ENCODE measurements at regions of chr18 and their contacts with region 1.

Region 1: DNA sequence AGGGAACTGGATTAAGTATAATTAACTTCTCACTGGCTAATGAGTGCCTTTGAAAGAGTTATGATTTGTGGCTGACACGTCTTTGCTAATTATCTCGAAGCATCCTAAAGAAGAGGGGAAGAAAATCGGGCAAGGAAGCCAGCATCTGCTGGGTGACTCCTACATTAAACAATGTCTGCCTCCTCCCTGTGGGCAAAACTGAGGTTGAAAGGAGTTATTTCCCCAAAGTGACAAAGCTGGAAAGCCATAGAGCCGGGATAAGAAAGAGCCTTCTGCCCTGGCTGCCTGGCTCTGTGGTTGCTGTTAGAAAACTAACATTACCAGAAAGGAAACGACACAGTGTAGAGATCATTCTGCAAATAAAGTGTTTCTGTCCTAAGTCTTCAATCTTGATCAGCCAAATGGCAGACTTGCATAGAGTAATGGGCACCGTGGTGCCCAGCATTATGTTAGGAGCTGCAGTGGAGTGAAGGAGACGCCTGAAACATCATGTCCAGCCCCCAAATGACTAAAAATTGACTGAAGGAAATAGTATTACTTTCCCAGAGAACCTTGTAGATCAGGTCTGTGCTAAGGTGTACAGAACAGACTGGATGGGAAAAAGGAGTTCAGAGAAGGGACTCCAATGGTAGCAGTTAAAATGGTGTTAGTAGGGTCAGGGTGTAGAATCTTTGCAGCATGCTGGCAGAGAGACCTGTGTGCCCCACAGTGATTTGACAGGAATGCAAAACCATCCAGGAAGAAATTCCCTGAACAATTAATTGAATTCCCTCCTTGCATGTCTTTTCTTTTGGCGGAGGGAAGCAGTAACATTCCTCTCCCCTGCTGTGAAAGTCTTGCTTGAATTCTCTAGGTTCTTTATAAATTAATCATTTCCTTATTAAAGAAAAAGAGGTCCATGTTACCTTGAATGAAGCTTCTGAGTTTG is 44.4 kb downstream of the ALPK2 start:
- DNase-seq: peak; percentile 39
- ATAC-seq: peak; percentile 36
- H3K4me3 ChIP-seq: no peak overlapping the region
- H3K27ac ChIP-seq: no peak overlapping the region
- H3K4me1 ChIP-seq: peaks cover 20% of the 10 kb centered on the region
- H3K27me3 ChIP-seq: no peaks in the 10 kb centered on the region
- CTCF ChIP-seq: no peak

Region 2: GRCh38 chr18:58438161-58438957 is 146.1 kb before region 1 on chr18:
- CTCF ChIA-PET with region 1: no interaction called
- POLR2A ChIA-PET with region 1: no interaction called
- intact Hi-C with region 1: no loop called
- DNase-seq: no peak
- ATAC-seq: no peak
- H3K4me3 ChIP-seq: no peak overlapping the region
- H3K27ac ChIP-seq: no peak overlapping the region
- H3K4me1 ChIP-seq: no peaks in the 10 kb centered on the region
- H3K27me3 ChIP-seq: no peaks in the 10 kb centered on the region
- CTCF ChIP-seq: no peak

Region 3: GRCh38 chr18:58493516-58494253 is 90.8 kb before region 1 on chr18:
- CTCF ChIA-PET with region 1: no interaction called
- POLR2A ChIA-PET with region 1: no interaction called
- intact Hi-C with region 1: no loop called
- DNase-seq: peak; percentile 82
- ATAC-seq: peak; percentile 89
- H3K4me3 ChIP-seq: peak overlapping the region; percentile 43; the same call in 1 of the 2 replicates
- H3K27ac ChIP-seq: no peak overlapping the region
- H3K4me1 ChIP-seq: 0 out of 2 replicates have a peak, but pooled peaks cover 6% of the 10 kb centered on the region
- H3K27me3 ChIP-seq: no peaks in the 10 kb centered on the region
- CTCF ChIP-seq: peak; percentile 93

Region 4: GRCh38 chr18:58529714-58530354 is 54.6 kb before region 1 on chr18:
- CTCF ChIA-PET with region 1: no interaction called
- POLR2A ChIA-PET with region 1: no interaction called
- intact Hi-C with region 1: loop called (anchors 2 kb)
- DNase-seq: peak; percentile 71
- ATAC-seq: peak; percentile 75
- H3K4me3 ChIP-seq: no peak overlapping the region
- H3K27ac ChIP-seq: no peak overlapping the region
- H3K4me1 ChIP-seq: no peaks in the 10 kb centered on the region
- H3K27me3 ChIP-seq: no peaks in the 10 kb centered on the region
- CTCF ChIP-seq: peak; percentile 97

Region 5: GRCh38 chr18:58624011-58624410 is 39.5 kb after region 1 on chr18:
- CTCF ChIA-PET with region 1: no interaction called
- POLR2A ChIA-PET with region 1: no interaction called
- intact Hi-C with region 1: no loop called
- DNase-seq: no peak
- ATAC-seq: no peak
- H3K4me3 ChIP-seq: no peak overlapping the region
- H3K27ac ChIP-seq: no peak overlapping the region
- H3K4me1 ChIP-seq: no peaks in the 10 kb centered on the region
- H3K27me3 ChIP-seq: no peaks in the 10 kb centered on the region
- CTCF ChIP-seq: no peak